ENCODE measurements at regions of chr15 and their contacts with region 1.

Region 1: DNA sequence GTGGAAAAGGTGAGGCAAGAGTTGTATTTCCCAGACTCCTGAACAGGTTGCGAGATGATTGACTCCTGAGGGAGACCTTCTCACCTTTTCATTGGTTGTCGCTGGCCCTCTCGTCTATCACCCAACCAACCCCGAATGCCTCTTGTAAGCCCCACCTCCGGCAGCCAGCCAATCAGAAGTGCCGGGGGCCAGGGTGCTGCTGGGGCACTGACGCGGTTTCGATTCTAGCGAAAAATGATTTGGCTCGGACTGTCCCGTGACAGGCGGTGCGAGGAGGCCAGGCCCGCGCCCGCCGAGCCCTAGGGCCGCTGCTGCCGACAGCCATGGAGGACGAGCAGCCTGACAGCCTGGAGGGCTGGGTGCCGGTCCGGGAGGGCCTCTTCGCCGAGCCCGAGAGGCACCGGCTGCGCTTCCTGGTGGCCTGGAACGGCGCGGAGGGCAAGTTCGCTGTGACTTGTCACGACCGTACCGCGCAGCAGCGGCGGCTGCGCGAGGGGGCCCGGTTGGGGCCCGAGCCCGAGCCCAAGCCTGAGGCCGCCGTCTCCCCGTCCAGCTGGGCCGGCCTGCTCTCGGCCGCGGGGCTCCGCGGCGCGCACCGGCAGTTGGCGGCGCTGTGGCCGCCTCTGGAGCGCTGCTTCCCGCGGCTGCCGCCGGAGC is at the start of gene WHAMM:
- DNase-seq: peak; percentile 99
- H3K4me3 Mint-ChIP-seq: peak within 1 kb of the TSS; percentile 96
- H3K27ac Mint-ChIP-seq: peak within 1 kb of the TSS; percentile 92
- H3K4me1 Mint-ChIP-seq: peaks cover 12% of the 10 kb centered on the region
- H3K27me3 Mint-ChIP-seq: no peaks in the 10 kb centered on the region
- CTCF ChIP-seq: no peak
- total RNA-seq, gene WHAMM: 12.1 and 12.5 TPM in 2 replicates

Region 2: DNA sequence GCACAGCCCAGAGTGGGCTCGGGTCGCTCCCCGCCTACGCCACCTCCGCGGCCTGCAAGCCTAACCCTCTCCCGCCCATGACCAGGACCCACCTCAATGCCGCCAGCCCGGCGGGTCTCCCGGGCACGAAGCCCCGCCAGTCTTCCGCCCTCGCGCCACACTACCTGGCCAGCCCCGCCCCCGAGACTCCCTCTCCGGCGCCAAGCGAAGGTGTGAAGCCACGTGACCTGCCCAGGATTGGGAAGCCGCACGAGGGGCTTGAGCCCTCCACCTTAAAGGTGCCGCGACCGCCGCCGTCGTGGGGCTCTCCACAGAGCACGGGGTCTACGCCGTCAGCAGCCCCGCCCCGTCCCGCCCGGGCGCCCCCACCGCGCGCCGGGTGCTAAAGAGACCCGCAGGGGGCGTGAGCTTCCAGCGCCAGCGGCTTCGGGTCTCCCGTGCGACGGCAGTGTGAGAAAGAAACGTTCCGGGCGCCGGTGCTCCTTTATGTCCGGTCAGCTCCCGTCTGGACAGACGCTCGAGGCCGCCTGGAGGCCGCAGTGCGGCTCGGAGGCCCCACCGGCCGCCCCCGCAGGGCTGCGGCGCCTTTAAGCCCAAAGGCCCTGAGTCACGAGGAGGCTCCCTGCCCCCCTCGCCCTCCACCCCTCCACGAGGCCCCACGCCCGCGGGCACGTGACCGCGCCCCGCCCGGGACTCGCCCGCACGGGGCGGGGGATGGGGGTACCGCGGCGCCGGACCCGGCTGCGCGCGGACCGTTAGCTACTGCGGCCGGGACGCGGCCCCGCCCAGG is 162.3 kb before region 1 on chr15 and contains the start of gene CPEB1:
- CTCF ChIA-PET with region 1: no interaction called
- intact Hi-C with region 1: loop called (anchors 5 kb)
- DNase-seq: peak; percentile 62
- H3K4me3 Mint-ChIP-seq: peak within 1 kb of the TSS; percentile 59
- H3K27ac Mint-ChIP-seq: no peak within 1 kb of the TSS
- H3K4me1 Mint-ChIP-seq: peaks cover 9% of the 10 kb centered on the region
- H3K27me3 Mint-ChIP-seq: peaks cover 34% of the 10 kb centered on the region
- CTCF ChIP-seq: no peak
- total RNA-seq, gene CPEB1: 5.3 and 7.6 TPM in 2 replicates

Measured in Calu3 (cell line).